BJ (cell line): ENCODE measurements at regions of chr5 and their contacts with region 1.

Region 1: DNA sequence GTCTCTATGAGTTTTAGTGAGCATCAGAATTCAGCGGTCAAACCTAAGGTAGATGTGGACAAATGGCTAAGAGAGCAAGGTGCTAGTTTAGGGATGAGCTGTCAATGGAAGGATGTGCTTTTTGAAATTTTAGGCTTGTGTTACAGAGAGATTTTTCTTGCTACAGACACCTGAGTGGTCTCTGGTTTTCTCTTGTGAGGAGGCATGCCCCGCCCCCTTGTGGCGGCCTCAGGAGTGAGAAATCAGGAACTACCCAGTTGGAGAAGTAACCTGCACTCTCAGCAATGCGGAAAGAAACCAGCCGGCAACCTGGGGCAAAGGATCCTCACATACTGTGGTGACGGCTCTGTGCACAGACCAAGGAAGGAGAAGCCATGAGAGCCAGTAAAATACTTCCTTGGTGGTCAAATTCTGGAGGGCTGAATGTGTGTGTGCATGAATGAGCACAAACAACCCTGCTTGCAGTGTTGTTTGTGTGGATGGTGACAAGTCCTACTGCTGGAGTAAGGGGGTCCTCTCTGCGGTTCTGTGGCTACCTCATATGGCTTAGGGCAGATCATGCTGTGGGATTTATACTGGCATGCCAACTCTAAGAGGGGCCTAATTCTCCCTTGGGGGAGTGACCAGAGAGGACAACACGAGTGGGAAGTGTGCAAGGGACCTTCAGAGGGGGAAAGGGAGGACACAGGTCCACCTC is 16.7 kb upstream of the HSD17B4 start:
- DNase-seq: no peak
- H3K4me3 ChIP-seq: no peak overlapping the region
- H3K27me3 ChIP-seq: peaks cover 4% of the 10 kb centered on the region
- CTCF ChIP-seq: peak; percentile 78

Region 2: DNA sequence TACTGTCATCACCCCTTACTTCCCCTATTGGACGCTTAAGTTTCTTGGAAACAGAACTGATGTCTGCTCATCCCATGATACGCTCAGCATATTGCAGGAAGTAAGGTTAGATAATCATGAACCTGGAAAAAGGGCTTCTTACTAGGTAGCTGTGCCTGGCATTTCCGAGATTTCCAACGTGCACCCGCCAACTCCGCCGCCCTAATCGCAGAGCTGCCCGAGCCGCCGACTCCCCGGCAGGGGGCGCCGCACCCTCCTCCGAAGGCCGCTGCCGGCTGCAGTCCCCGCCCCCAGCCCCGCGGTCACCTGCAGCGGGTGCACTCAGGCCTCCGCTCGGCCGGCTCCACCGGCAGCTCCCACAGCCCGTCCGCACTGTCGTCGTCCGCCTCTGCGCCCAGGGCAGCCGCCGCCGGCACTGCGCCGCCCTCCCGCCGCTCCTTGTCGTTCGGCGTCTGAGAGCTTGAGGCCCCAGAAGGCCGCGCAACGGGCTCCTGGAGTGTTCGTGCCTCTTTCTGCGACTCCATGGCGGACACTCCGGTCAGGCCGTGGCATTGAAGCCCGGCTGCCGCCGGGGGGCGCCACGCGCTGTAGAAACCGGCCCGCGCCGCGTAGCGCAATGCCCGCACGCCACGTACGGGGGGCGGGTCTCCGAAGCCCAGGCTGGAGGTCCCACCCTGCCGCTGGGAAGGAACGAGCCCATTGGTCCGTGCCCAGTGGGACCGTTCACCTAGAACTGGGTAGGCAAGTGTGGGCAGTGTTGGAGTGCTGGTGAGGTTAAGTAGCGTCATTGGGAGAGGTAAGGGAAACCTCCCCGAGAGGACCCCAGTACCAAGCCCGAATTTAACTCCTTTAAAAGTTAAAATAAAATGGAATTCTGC is 447.4 kb before region 1 on chr5 and contains the start of gene DTWD2:
- CTCF ChIA-PET with region 1: interaction called, 30 read pairs
- POLR2A ChIA-PET with region 1: no interaction called
- DNase-seq: no peak
- H3K4me3 ChIP-seq: peak within 1 kb of the TSS; percentile 55
- H3K27me3 ChIP-seq: no peaks in the 10 kb centered on the region
- CTCF ChIP-seq: peak; percentile 86
- polyA plus RNA-seq, gene DTWD2: 1.8 and 3.3 TPM in 2 replicates

Region 3: DNA sequence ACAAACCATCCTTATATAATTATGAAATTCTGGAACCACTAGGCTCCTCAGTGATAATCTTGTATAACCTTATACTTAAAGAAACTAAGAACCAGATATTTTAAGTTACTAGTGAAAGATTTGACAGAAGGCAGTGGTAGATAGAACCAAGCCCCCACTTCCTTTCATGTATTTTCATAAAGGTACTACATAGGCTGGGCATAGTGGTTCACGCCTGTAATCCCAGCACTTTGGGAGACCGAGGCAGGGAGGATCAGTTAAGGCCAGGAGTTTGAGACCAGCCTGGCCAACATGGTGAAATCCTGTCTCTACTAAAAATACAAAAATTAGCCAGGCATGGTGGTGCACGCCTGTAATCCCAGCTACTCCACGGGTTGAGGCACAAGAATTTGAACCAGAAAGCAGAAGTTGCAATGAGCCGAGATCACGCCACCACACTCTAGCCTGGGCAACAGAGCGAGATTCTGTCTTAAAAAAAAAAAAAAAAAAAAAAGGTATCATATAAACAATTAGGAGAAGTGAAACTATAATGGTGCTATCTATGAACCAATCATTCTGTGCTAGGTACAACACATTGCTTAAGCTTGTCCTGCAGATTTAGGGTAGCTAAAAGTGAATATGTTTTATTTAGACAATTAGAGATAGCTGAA is 419.3 kb before region 1 on chr5:
- CTCF ChIA-PET with region 1: interaction called, 10 read pairs
- POLR2A ChIA-PET with region 1: no interaction called
- DNase-seq: no peak
- H3K4me3 ChIP-seq: no peak overlapping the region
- H3K27me3 ChIP-seq: no peaks in the 10 kb centered on the region
- CTCF ChIP-seq: no peak

Region 4: GRCh38 chr5:119418531-119419116 is 17.0 kb before region 1 on chr5:
- CTCF ChIA-PET with region 1: interaction called, 15 read pairs
- POLR2A ChIA-PET with region 1: no interaction called
- DNase-seq: no peak
- H3K4me3 ChIP-seq: no peak overlapping the region
- H3K27me3 ChIP-seq: no peaks in the 10 kb centered on the region
- CTCF ChIP-seq: no peak

Region 5: DNA sequence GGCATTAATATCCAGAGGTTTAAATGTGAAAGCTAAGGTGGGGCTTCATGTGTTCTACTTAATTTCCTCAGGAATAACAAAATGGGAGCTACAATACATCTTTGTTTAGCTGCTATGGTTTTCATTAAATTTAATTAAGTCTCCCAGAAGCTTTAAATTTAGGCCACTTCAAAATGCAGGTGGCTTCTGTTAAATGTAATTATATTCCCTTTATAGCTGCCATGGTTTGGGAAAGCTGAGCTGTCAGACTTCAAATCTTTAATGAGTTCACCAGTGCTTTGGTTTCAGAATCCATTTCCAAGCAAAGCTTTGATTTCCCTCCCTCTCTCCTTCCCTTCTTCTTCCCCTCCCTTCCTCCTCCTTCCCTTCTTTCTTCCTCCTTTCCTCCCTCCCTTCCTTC is 135.3 kb after region 1 on chr5:
- CTCF ChIA-PET with region 1: no interaction called
- POLR2A ChIA-PET with region 1: no interaction called
- DNase-seq: no peak
- H3K4me3 ChIP-seq: no peak overlapping the region
- H3K27me3 ChIP-seq: no peaks in the 10 kb centered on the region
- CTCF ChIP-seq: no peak